ENCODE measurements at regions of chr9 and their contacts with region 1.

Region 1: GRCh38 chr9:107340920-107341632 is 58.0 kb downstream of the RAD23B start:
- DNase-seq: peak; percentile 77
- ATAC-seq: peak; percentile 83
- H3K4me3 Mint-ChIP-seq: peak overlapping the region; percentile 22
- H3K27ac Mint-ChIP-seq: peak overlapping the region; percentile 36
- H3K4me1 Mint-ChIP-seq: peaks cover 9% of the 10 kb centered on the region
- H3K27me3 Mint-ChIP-seq: no peaks in the 10 kb centered on the region
- CTCF ChIP-seq: peak; percentile 38

Region 2: GRCh38 chr9:107158321-107158720 is 182.8 kb before region 1 on chr9:
- CTCF ChIA-PET with region 1: interaction called, 5 read pairs
- POLR2A ChIA-PET with region 1: no interaction called
- intact Hi-C with region 1: loop called (anchors 1 kb)
- DNase-seq: no peak
- ATAC-seq: no peak
- H3K4me3 Mint-ChIP-seq: no peak overlapping the region
- H3K27ac Mint-ChIP-seq: no peak overlapping the region
- H3K4me1 Mint-ChIP-seq: no peaks in the 10 kb centered on the region
- H3K27me3 Mint-ChIP-seq: peaks cover 12% of the 10 kb centered on the region
- CTCF ChIP-seq: no peak

Region 3: DNA sequence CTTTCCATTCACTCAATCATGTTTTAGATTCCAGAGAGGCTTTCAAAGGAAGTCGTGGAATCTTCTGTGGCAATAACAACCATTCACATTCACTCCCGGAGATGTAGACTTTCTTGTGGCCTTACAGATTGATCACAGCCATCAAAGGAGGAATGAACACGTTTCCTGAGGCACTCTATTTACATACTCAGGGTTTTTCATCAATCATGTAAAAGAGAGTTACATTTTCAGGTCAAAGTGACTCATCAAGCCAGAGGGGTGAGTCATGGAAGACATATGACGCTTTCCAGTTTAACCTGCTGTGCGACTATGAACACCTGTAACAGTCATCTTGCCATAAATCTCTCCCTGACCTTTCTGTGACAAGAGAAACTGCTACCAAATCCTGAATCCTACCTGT is 97.3 kb before region 1 on chr9:
- CTCF ChIA-PET with region 1: interaction called, 205 read pairs
- POLR2A ChIA-PET with region 1: interaction called, 5 read pairs
- intact Hi-C with region 1: loop called (anchors 1 kb)
- DNase-seq: no peak
- ATAC-seq: peak; percentile 68
- H3K4me3 Mint-ChIP-seq: no peak overlapping the region
- H3K27ac Mint-ChIP-seq: no peak overlapping the region
- H3K4me1 Mint-ChIP-seq: peaks cover 18% of the 10 kb centered on the region
- H3K27me3 Mint-ChIP-seq: peaks cover 4% of the 10 kb centered on the region
- CTCF ChIP-seq: no peak

Region 4: DNA sequence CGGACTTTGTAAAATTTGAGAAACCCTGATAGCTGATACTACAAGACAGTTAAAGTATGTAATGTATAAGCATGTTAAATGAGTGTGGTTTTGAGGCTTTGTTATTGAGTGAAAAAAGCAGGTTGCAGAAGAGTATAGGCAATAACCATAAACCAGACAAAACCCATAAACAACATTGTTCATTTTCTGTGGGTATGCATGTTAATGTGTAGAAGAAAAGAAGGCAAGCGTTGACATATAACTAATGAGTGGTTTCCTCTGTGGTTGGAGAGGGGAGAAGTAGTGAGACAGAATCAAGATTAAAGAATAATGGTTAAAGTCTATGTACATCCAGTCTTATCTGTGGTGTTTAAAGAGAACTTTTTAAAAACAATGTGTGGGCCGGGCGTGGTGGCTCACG is 31.8 kb before region 1 on chr9:
- CTCF ChIA-PET with region 1: interaction called, 11 read pairs
- POLR2A ChIA-PET with region 1: no interaction called
- intact Hi-C with region 1: no loop called
- DNase-seq: no peak
- ATAC-seq: no peak
- H3K4me3 Mint-ChIP-seq: no peak overlapping the region
- H3K27ac Mint-ChIP-seq: no peak overlapping the region
- H3K4me1 Mint-ChIP-seq: peaks cover 24% of the 10 kb centered on the region
- H3K27me3 Mint-ChIP-seq: no peaks in the 10 kb centered on the region
- CTCF ChIP-seq: no peak

Region 5: DNA sequence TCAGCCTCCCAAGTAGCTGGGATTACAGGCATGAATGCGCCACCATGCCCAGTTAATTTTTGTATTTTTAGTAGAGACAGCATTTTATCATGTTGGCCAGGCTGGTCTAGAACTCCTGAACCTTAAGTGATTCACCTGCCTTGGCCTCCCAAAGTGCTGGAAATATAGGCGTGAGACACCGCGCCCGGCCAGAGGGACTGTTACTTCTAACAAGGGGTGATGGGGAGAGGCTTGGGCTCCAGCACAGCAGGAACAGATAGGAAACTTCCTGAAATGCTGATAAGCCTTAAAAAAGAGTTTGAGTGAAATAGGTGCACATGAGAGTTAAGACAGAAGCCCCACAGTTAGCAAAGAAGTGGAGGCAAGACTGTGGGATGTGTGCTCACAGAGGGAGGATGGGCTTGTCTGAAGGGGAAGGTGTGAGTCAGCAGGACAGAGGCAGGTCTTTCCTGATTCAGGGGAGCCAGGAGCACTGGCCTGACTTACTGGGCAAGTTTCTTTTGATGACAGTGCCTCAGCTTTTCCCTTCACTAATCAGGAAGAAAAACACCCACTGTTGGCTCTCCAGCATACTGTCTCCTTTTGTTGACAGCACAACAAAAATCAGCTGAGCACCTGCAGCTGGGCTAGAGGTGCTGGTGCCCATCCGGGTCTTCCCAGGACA is 10.4 kb after region 1 on chr9:
- CTCF ChIA-PET with region 1: interaction called, 14 read pairs
- POLR2A ChIA-PET with region 1: no interaction called
- intact Hi-C with region 1: no loop called
- DNase-seq: no peak
- ATAC-seq: no peak
- H3K4me3 Mint-ChIP-seq: no peak overlapping the region
- H3K27ac Mint-ChIP-seq: no peak overlapping the region
- H3K4me1 Mint-ChIP-seq: no peaks in the 10 kb centered on the region
- H3K27me3 Mint-ChIP-seq: peaks cover 3% of the 10 kb centered on the region
- CTCF ChIP-seq: no peak

Measured in activated B cell treated with CpG ODN at 0.5 μM for 24 hours (primary cell).